ENCODE measurements at regions of chr2 and their contacts with region 1.

Region 1: GRCh38 chr2:227130636-227131035 is 33.4 kb downstream of the COL4A4 start:
- DNase-seq: no peak
- H3K4me3 Mint-ChIP-seq: no peak overlapping the region
- H3K27ac Mint-ChIP-seq: no peak overlapping the region
- H3K4me1 Mint-ChIP-seq: no peaks in the 10 kb centered on the region
- H3K27me3 Mint-ChIP-seq: peaks cover 13% of the 10 kb centered on the region

Region 2: GRCh38 chr2:227238238-227239237 is 107.9 kb after region 1 on chr2:
- intact Hi-C with region 1: loop called (anchors 1 kb)
- DNase-seq: peak; percentile 86
- H3K4me3 Mint-ChIP-seq: no peak overlapping the region
- H3K27ac Mint-ChIP-seq: no peak overlapping the region
- H3K4me1 Mint-ChIP-seq: no peaks in the 10 kb centered on the region
- H3K27me3 Mint-ChIP-seq: peaks cover 13% of the 10 kb centered on the region

Measured in activated CD4-positive, alpha-beta T cell treated with anti-CD3 and anti-CD28 coated beads, Interleukin-2, amount 10 ng/mL, durations not matched to agents 24 days and 14 days (primary cell).